ENCODE measurements at regions of chr3 and their contacts with region 1.

Region 1: DNA sequence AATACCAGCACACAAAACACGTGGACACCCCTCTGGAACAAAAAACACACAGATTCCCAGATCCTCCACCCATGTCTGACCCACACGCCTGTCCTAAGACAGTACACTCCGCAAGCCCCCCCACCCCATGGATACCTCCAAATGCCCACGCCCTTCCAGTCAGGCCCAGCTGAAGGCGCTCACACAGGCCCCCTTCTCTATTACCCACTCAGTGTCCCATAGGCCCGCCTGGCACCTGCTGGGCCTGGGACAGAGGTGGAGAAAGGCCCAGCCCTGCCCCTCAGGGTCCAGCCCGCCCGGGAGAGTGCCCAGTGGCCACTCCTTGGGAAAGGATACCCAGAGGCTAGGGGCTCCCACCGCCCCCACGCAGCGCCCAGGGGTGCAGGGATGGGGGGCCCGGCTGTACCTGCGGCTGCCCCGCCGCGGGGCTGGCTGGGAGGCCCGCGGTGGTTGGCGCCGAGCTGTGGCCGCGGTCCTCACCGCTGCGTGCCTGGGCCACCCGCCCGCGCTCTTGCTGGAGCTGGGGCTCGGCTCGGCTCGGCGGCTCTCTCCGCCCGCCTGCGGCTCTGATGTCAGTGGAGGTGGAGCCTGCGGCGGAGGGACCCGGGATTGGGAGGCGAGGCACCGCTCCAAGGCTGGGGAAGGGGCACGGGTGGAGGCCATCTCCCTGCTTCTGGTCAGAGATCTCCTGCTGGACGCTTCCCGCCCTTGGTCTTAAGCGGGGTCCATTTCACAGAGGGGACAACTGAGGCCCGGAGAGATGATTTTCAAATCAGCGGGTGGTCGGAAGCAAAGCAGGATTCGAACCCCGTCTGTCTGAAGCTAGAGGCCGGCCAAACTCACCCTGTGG is at the start of gene CAMK1:
- DNase-seq: peak; percentile 67
- H3K4me3 Mint-ChIP-seq: peak within 1 kb of the TSS; percentile 80
- H3K27ac Mint-ChIP-seq: peak within 1 kb of the TSS; percentile 71
- H3K4me1 Mint-ChIP-seq: peaks cover 30% of the 10 kb centered on the region
- H3K27me3 Mint-ChIP-seq: peaks cover 2% of the 10 kb centered on the region
- total RNA-seq, gene CAMK1: 55.0 and 57.8 TPM in 2 replicates

Region 2: DNA sequence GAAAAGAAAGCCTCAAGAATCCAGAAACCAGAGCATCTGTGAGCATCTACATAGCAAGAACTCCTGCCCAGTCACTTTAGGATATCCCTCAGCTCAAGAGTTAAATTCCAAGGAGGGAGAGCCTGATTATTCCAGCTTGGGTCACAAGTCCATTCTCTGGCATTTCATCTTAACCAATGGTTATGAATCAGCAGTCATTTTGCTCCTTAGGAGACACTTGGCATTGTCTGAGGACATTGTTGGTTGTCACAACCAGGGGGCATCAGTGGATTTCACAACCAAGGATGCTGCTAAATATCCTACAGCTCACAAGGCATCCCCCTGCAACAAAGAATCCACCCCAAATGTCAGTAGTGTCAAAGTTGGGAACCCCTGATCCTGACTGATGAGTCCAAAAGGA is 1319.0 kb before region 1 on chr3:
- intact Hi-C with region 1: no loop called
- DNase-seq: no peak
- H3K4me3 Mint-ChIP-seq: no peak overlapping the region
- H3K27ac Mint-ChIP-seq: no peak overlapping the region
- H3K4me1 Mint-ChIP-seq: no peaks in the 10 kb centered on the region
- H3K27me3 Mint-ChIP-seq: no peaks in the 10 kb centered on the region

Region 3: GRCh38 chr3:9779721-9780457 is 10.2 kb after region 1 on chr3:
- intact Hi-C with region 1: loop called (anchors 1 kb)
- DNase-seq: peak; percentile 23
- H3K4me3 Mint-ChIP-seq: peak overlapping the region; percentile 31
- H3K27ac Mint-ChIP-seq: peak overlapping the region; percentile 90
- H3K4me1 Mint-ChIP-seq: peaks cover 55% of the 10 kb centered on the region
- H3K27me3 Mint-ChIP-seq: no peaks in the 10 kb centered on the region

Region 4: GRCh38 chr3:9786825-9787669 is 17.4 kb after region 1 on chr3:
- intact Hi-C with region 1: loop called (anchors 2 kb)
- DNase-seq: no peak
- H3K4me3 Mint-ChIP-seq: no peak overlapping the region
- H3K27ac Mint-ChIP-seq: peak overlapping the region; percentile 94
- H3K4me1 Mint-ChIP-seq: peaks cover 46% of the 10 kb centered on the region
- H3K27me3 Mint-ChIP-seq: no peaks in the 10 kb centered on the region

Region 5: DNA sequence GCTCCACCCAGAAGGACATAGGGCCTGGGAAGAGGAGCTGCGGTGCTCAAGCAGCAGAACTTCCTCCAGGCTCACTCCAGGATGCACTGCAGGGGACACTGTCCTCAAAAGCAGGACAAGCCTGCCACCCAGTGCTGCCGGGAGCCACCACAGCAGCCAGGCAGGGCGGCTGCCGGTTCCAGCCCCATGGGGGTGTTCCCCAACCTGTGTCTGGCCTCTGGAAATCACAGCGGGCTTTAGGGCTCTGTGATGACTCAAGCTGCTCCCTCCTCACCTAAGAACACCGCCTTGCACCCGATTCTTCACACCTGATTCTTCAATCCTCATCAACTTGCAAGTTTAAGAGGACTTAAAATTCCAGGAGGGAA is 974.4 kb after region 1 on chr3:
- intact Hi-C with region 1: no loop called
- DNase-seq: peak; percentile 6
- H3K4me3 Mint-ChIP-seq: no peak overlapping the region
- H3K27ac Mint-ChIP-seq: no peak overlapping the region
- H3K4me1 Mint-ChIP-seq: peaks cover 1% of the 10 kb centered on the region
- H3K27me3 Mint-ChIP-seq: peaks cover 5% of the 10 kb centered on the region

Measured in activated T-helper 1 cell treated with anti-CD3 and anti-CD28 coated beads, Interleukin-12 subunit alpha, Interleukin-12 subunit beta, Interleukin-2, Interleukin-4 antibody, amounts not matched to agents 30 ng/mL and 10 ng/mL and 1 ng/mL, durations not matched to agents 14 hours and 24 hours and 36 hours (primary cell).